Panc1 (cell line): ENCODE measurements at regions of chr10 and their contacts with region 1.

Region 1: DNA sequence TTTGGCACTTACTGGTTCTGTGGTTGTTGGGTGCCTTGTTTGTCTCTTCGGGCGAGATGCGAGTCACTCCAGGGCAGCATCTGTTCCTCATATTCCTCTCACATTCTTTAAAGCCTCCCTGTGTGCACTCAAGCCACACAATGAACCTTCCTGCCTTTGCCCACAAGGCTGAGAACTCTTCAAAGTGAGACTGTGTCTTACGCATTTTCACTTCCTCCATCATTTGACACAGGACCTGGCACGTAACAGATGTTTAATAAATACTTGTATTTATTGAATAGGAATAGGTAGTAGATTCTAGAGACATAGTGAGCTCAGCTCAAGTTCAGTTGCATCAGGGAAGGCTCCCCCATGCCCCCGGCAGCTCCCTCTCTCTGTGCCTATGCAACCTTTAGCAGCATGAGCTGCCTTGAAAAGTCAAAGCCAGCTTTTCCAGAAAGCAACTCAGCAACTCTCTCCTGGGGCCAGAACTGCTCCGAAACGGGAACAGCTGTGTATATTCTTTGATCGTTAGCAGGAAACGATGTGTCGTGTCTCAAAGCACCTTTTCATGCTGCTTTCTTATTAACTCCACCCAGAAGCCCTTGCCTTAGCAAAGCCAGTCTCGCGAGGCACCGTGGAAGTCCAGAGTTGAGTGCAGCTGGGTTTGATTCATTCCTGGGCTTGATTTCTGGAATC is 97.5 kb downstream of the PFKFB3 start:
- DNase-seq: no peak
- ATAC-seq: no peak
- H3K4me3 ChIP-seq: no peak overlapping the region
- H3K27ac ChIP-seq: no peak overlapping the region
- H3K4me1 ChIP-seq: no peaks in the 10 kb centered on the region
- H3K27me3 ChIP-seq: no peaks in the 10 kb centered on the region
- CTCF ChIP-seq: no peak

Region 2: DNA sequence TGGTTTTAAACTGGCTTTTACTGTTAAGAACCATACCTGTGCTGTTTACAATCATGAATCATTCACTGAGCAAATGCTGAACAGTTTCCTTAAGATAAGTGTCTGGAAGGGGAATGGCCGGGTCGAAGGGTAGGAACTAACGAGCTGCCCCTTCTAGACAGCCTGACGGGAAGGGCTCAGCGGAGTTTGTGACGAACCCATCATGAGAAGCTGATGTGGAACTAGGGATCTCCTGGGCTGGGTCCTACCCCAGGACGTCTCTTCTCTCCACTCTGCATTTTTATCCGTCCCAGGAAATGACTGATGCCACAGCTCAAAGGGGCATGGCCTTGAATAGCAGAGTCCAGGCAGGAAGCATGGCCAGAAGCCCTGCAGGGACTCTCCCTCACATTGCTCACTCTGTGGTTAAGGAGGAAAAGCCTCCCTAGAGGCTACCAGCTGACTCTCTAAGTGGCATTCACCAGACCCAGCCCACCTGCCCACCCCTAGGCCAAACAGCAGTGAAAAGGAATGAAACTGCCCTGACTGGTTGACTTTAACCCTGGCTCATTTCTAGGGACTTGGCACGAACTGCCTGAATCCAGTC is 14.5 kb after region 1 on chr10:
- CTCF ChIA-PET with region 1: no interaction called
- POLR2A ChIA-PET with region 1: interaction called, 14 read pairs
- in situ Hi-C with region 1: no loop called
- intact Hi-C with region 1: no loop called
- DNase-seq: no peak
- ATAC-seq: peak; percentile 84
- H3K4me3 ChIP-seq: peak overlapping the region in 1 of 2 experiments; percentile 28; a peak in 2 of 4 replicates
- H3K27ac ChIP-seq: no peak overlapping the region
- H3K4me1 ChIP-seq: no peaks in the 10 kb centered on the region
- H3K27me3 ChIP-seq: no peaks in the 10 kb centered on the region
- CTCF ChIP-seq: no peak

Region 3: DNA sequence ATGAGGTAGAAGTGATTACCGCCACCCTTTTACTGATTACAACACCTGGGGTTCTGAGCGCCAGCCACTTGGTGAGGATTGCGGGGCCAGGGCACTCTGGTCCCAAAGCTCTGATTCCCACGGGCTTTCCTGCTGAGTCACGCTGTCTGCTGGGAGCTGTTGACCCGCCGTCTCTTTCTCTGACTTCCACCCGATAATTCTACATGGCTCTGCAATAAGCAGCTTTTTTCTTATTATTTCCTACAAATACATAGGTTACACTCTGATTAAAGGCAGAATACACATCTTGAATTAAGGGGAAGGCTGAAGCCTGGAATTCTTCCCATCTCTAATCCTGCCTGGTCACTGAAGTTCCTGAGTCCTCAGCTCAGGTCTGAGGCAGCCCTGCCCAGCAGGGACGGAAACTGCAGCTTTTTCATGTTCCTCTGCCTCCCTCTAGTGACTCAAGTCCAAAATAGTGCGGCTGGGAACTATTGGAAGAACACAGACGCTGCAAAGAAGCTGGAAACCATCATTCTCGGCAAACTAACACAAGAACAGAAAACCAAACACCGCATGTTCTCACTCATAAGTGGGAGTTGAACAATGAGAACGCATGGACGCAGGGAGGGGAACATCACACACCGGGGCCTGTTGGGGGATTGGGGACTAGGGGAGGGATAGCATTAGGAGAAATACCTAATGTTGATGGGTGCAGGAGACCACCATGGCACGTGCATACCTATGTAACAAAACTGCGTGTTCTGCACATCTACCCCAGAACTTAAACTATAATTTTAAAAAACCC is 101.5 kb after region 1 on chr10:
- CTCF ChIA-PET with region 1: no interaction called
- POLR2A ChIA-PET with region 1: no interaction called
- in situ Hi-C with region 1: no loop called
- intact Hi-C with region 1: no loop called
- DNase-seq: peak; percentile 75
- ATAC-seq: peak; percentile 98
- H3K4me3 ChIP-seq: peak overlapping the region; percentile 36 to 60
- H3K27ac ChIP-seq: peak overlapping the region; percentile 72
- H3K4me1 ChIP-seq: peaks cover 3% of the 10 kb centered on the region; the same call in 1 of the 2 replicates
- H3K27me3 ChIP-seq: peaks cover 2% of the 10 kb centered on the region; the same call in 1 of the 2 replicates
- CTCF ChIP-seq: peak; percentile 73

Region 4: GRCh38 chr10:6578251-6578771 is 278.1 kb after region 1 on chr10:
- CTCF ChIA-PET with region 1: no interaction called
- POLR2A ChIA-PET with region 1: no interaction called
- in situ Hi-C with region 1: no loop called
- intact Hi-C with region 1: no loop called
- DNase-seq: no peak
- ATAC-seq: no peak
- H3K4me3 ChIP-seq: no peak overlapping the region
- H3K27ac ChIP-seq: no peak overlapping the region
- H3K4me1 ChIP-seq: no peaks in the 10 kb centered on the region
- H3K27me3 ChIP-seq: peaks cover 10% of the 10 kb centered on the region
- CTCF ChIP-seq: no peak